ENCODE measurements at regions of chr6 and their contacts with region 1.

Region 1: GRCh38 chr6:44151348-44152108 is 7.1 kb upstream of the CAPN11 start:
- DNase-seq: peak; percentile 68
- H3K4me3 ChIP-seq: no peak overlapping the region
- H3K27ac ChIP-seq: no peak overlapping the region
- H3K4me1 ChIP-seq: no peaks in the 10 kb centered on the region
- H3K27me3 ChIP-seq: no peaks in the 10 kb centered on the region
- CTCF ChIP-seq: peak; percentile 99 to 100 (median 100)
- POLR2A ChIP-seq: no peak

Region 2: DNA sequence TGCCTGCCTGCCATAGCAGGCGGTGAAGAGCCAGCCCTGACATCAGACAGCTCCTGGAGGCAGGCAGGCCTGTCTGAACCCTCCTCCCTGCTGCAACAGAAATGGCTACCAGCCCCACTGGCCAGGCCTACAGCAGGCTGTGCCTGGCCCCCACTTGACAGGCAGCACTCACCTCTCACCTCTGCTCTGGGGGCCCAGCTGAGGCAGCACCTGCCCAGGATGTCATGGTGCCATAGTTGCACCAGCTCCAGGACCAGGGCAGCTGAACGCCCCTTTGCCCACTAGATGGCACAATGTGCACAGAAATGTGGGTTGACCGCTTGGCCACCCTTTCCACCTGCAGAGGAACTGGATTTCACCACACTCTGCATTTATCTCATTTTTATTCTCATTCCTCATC is 54.9 kb before region 1 on chr6:
- intact Hi-C with region 1: loop called (anchors 1 kb)
- DNase-seq: peak; percentile 67
- H3K4me3 ChIP-seq: no peak overlapping the region
- H3K27ac ChIP-seq: no peak overlapping the region
- H3K4me1 ChIP-seq: no peaks in the 10 kb centered on the region
- H3K27me3 ChIP-seq: no peaks in the 10 kb centered on the region
- CTCF ChIP-seq: peak; percentile 58 to 89 (median 76)
- POLR2A ChIP-seq: no peak

Region 3: GRCh38 chr6:44387346-44388133 is 236.0 kb after region 1 on chr6 and contains the start of gene CDC5L:
- intact Hi-C with region 1: no loop called
- DNase-seq: peak; percentile 94
- H3K4me3 ChIP-seq: peak within 1 kb of the TSS; percentile 83 to 91
- H3K27ac ChIP-seq: peak within 1 kb of the TSS; percentile 95 to 96
- H3K4me1 ChIP-seq: no peaks in the 10 kb centered on the region
- H3K27me3 ChIP-seq: no peaks in the 10 kb centered on the region
- CTCF ChIP-seq: peak in 2 of 4 experiments; percentile 10
- POLR2A ChIP-seq: peak; percentile 88
- total RNA-seq, gene CDC5L: 18.0 to 18.9 TPM

Measured in prostate gland (tissue), 2 donors.